ENCODE measurements at regions of chr1 and their contacts with region 1.

Region 1: GRCh38 chr1:3900119-3900968 is at the start of gene C1orf174:
- DNase-seq: peak; percentile 81
- H3K4me3 Mint-ChIP-seq: peak within 1 kb of the TSS; percentile 80
- H3K27ac Mint-ChIP-seq: peak within 1 kb of the TSS; percentile 88
- H3K4me1 Mint-ChIP-seq: no peaks in the 10 kb centered on the region
- H3K27me3 Mint-ChIP-seq: no peaks in the 10 kb centered on the region
- CTCF ChIP-seq: no peak
- total RNA-seq, gene C1orf174: 20.9 and 21.1 TPM in 2 replicates

Region 2: DNA sequence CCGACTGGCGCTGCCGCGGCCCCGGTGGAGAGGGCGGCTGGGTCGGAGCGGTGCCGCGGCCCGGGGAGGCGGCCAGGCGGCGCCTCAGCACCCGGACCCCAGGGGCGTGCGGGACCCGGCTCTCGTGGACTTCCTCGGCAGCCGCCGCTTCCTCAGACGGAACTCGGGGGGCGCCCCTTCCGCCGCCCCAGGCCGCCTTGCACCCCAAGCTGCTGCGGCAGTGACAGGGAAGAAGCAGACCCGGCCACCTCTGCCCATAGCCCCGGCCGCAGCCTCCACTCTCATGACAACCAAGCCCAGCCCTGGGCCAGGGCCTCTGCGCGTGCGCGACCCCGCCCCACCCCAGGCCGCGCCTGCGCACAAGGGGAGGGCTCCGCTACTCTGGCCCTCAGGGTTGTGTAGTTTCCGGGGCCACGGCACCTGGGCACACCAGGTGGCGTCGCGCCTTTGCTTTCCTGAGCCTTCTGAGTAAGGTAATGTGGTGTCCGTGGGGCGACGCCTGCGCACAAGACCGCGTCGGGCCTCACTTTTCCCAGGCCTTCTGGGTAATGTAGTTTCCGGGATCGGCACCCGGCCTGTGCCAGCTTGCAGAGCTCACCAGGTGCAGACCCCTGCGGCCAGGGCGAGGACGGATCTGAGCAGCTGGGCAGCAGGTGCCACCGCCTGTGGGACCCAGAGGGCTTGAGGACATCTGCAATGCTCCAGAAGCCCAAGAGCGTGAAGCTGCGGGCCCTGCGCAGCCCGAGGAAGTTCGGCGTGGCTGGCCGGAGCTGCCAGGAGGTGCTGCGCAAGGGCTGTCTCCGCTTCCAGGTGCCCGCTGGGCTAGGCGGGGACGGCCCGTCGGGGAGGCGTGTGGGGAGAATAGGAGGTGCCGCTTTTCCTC is 43.2 kb before region 1 on chr1 and contains the starts of genes CEP104 and DFFB:
- CTCF ChIA-PET with region 1: interaction called, 3 read pairs
- intact Hi-C with region 1: loop called (anchors 2 kb)
- DNase-seq: peak; percentile 94
- H3K4me3 Mint-ChIP-seq: peak within 1 kb of the TSS; percentile 95
- H3K27ac Mint-ChIP-seq: no peak within 1 kb of the TSS
- H3K4me1 Mint-ChIP-seq: peaks cover 8% of the 10 kb centered on the region
- H3K27me3 Mint-ChIP-seq: no peaks in the 10 kb centered on the region
- CTCF ChIP-seq: no peak
- total RNA-seq, gene CEP104: 29.4 and 34.3 TPM in 2 replicates
- total RNA-seq, gene DFFB: 6.5 and 6.6 TPM in 2 replicates